ENCODE measurements at regions of chr22 and their contacts with region 1.

Region 1: DNA sequence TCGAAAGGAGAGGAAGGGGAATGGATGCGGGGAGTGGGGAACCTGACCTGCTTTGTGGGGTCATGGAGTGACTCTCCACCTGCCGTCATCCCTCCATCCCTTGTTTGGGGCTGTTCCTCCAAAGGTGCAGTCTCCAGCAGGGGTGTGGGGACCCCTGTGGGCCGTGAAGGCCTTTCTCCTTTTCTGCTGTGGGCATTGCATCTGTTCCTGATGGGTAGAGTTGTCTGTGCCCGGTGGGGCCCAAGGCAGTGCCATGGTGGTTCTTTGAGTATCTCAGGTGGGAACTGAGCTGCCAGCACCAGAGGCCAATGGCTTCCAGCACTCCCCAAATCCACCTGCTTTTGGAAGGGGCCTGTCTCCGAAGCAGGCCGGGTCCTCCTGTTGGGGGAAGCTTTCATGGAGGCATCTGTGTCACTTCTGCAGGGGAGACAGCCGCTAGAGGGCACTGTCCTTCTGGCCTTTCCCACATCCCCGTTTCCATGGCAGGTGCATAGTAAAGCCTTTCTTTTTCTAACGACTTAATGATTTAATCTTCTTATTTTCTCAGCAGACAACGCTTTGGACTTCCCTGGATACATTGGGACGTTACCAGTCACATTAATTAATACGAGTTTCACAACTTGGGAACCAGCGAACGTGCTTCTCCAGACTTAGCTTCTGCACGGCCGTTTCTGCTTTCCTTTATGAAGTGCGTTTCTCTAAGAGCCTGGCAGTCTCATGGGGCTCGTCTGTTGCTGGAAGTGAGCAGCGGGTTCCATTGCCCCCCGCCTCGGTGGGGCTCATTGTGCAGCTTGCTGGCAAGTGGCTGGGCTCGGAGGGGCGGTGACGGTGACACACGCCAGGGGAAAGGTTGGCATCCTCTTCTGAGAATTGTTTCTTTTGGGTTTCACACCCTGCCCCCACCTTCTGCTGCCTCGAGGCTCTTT is 57.1 kb downstream of the PARVB start:
- DNase-seq: peak; percentile 86
- ATAC-seq: peak; percentile 58
- H3K4me3 Mint-ChIP-seq: no peak overlapping the region
- H3K27ac Mint-ChIP-seq: no peak overlapping the region
- H3K4me1 Mint-ChIP-seq: no peaks in the 10 kb centered on the region
- H3K27me3 Mint-ChIP-seq: no peaks in the 10 kb centered on the region
- CTCF ChIP-seq: peak; percentile 87

Region 2: GRCh38 chr22:44003405-44004103 is 77.6 kb before region 1 on chr22:
- CTCF ChIA-PET with region 1: no interaction called
- POLR2A ChIA-PET with region 1: no interaction called
- intact Hi-C with region 1: no loop called
- DNase-seq: no peak
- ATAC-seq: no peak
- H3K4me3 Mint-ChIP-seq: no peak overlapping the region
- H3K27ac Mint-ChIP-seq: no peak overlapping the region
- H3K4me1 Mint-ChIP-seq: no peaks in the 10 kb centered on the region
- H3K27me3 Mint-ChIP-seq: no peaks in the 10 kb centered on the region
- CTCF ChIP-seq: no peak

Region 3: GRCh38 chr22:44068422-44069191 is 12.6 kb before region 1 on chr22:
- CTCF ChIA-PET with region 1: interaction called, 10 read pairs
- POLR2A ChIA-PET with region 1: no interaction called
- intact Hi-C with region 1: no loop called
- DNase-seq: peak; percentile 31
- ATAC-seq: peak; percentile 67
- H3K4me3 Mint-ChIP-seq: no peak overlapping the region
- H3K27ac Mint-ChIP-seq: peak overlapping the region; percentile 47
- H3K4me1 Mint-ChIP-seq: peaks cover 6% of the 10 kb centered on the region
- H3K27me3 Mint-ChIP-seq: peaks cover 4% of the 10 kb centered on the region
- CTCF ChIP-seq: no peak

Region 4: GRCh38 chr22:44625981-44626687 is 544.9 kb after region 1 on chr22:
- CTCF ChIA-PET with region 1: interaction called, 35 read pairs
- POLR2A ChIA-PET with region 1: no interaction called
- intact Hi-C with region 1: loop called (anchors 10 kb)
- DNase-seq: peak; percentile 83
- ATAC-seq: peak; percentile 85
- H3K4me3 Mint-ChIP-seq: no peak overlapping the region
- H3K27ac Mint-ChIP-seq: no peak overlapping the region
- H3K4me1 Mint-ChIP-seq: peaks cover 6% of the 10 kb centered on the region
- H3K27me3 Mint-ChIP-seq: no peaks in the 10 kb centered on the region
- CTCF ChIP-seq: peak; percentile 98